ENCODE measurements at regions of chr19 and their contacts with region 1.

Region 1: DNA sequence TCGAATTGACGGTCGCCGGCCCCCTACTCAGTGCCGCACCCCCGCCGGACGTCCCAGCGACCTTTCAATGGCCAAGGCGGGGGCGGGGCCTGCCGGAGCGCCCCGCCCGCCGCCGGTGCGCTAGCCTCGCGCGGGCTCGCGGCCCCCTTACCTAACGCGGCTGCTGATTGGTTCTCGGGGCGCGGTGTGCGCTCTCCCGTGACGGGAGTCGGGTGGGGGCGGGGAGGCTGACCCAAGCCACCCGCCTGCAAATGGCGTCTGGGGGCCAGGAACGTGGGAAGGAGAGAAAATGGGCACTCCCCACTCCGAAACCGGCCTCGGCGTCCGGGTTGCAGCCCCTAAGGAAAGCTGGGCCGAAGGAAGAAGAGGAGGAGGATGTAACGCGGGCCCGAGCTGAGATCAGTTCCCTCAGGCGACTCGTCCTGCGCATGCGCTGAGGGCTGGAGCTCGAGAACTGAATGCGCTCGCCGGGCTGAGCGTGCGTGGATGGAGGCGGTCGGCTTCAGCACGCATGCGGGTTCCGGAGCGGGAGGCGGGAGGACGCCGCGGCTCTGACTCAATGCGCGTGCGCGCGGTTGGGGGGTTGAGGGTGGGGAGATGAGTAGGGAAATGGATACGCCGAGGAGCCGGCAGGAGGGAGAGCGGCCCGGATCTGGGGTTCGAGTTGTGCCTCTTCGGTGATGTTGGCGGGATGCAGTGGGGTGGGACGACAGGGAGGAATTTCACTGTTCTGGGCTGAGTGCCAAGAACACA is at the start of gene SMG9:
- DNase-seq: peak; percentile 81
- H3K4me3 ChIP-seq: peak within 1 kb of the TSS; percentile 62
- H3K27me3 ChIP-seq: no peaks in the 10 kb centered on the region
- CTCF ChIP-seq: no peak
- polyA plus RNA-seq, gene SMG9: 10.1 and 14.8 TPM in 2 replicates

Region 2: GRCh38 chr19:43606569-43607229 is 148.0 kb before region 1 on chr19:
- CTCF ChIA-PET with region 1: no interaction called
- POLR2A ChIA-PET with region 1: no interaction called
- DNase-seq: no peak
- H3K4me3 ChIP-seq: no peak overlapping the region
- H3K27me3 ChIP-seq: no peaks in the 10 kb centered on the region
- CTCF ChIP-seq: no peak

Region 3: DNA sequence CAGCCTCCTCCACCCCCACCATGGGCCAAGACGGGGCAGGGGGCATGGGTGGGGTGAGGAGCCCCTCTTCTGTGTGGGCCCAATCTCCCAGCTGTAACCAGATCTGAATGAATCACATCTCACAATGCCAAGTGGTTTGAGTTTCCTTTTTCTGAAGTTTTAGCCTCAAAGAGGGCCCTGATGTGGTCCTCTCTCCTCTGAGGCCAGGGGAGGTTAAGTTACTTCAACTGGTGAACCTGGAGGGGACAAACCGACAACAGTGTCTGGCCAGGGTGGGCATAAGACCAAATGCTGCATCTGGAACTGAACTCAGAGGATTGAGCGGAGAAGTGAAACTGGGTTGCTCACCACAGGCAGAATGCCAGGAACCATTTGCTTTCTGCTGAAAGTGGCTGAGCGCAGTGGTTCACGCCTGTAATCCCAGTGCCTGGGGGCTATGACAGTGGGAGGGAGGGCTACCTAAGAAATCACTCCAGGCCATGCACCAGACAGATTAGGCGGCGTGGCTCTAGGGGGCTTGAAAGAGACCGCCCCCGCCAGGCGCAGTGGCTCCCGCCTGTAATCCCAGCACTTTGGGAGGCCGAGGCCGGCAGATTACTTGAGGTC is 54.2 kb before region 1 on chr19:
- CTCF ChIA-PET with region 1: no interaction called
- POLR2A ChIA-PET with region 1: no interaction called
- DNase-seq: peak; percentile 26
- H3K4me3 ChIP-seq: no peak overlapping the region
- H3K27me3 ChIP-seq: peaks cover 3% of the 10 kb centered on the region
- CTCF ChIP-seq: no peak

Region 4: DNA sequence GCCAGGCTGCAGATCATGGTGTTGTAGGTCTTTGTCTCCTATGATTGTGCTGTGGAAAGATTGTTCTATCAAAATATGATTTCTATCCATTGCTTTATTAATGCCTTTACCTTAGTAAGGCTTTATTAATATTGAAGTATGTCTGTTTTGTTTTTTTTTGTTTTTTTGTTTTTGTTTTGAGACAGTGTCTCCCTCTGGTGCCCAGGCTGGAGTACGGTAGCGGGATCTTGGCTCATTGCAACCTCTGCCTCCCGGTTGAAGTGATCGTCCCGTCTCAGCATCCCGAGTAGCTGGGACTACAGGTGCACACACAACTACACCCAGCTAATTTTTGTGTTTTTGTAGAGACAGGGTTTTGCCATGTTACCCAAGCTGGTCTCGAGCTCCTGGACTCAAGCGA is 31.1 kb before region 1 on chr19:
- CTCF ChIA-PET with region 1: no interaction called
- POLR2A ChIA-PET with region 1: no interaction called
- DNase-seq: no peak
- H3K4me3 ChIP-seq: no peak overlapping the region
- H3K27me3 ChIP-seq: no peaks in the 10 kb centered on the region
- CTCF ChIP-seq: peak; percentile 26

Region 5: DNA sequence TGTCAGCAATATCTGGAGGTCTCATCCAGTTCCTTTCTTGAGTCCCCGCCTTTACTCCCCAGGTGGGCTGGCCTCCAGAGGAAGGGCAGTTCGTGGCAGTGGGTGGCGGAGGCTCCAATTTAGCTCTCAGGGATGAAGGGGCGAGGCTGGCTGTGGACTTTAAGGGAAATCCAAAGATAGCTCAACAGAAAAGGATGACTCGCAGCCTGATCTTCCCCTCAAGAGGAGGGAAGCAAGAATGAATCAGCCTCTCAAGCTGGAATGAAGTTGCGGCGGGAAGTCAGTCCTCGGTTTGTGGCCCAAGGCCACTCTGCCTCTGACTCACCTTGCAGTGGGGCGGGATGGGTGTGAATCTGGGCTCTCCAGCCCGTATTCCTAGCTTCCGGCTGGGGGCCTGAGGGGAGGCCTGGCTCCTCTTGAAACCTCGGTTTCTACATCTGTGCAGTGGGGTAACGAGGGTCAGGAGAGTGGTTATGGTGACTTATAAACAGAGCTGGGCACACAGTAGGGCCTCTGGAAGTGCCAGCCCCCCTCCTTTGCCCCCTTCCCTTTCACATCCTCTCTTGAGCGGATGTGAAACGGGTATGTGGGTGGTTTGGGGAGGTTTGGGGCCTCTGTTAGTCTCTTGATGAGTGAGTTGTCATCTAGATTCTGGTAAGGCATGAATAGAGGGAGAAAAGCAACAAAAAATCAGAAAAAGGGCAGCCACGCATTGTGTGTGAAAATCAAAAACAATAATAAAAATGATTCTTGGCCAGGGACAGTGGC is 10.6 kb after region 1 on chr19:
- CTCF ChIA-PET with region 1: interaction called, 44 read pairs
- POLR2A ChIA-PET with region 1: interaction called, 4 read pairs
- DNase-seq: peak; percentile 92
- H3K4me3 ChIP-seq: no peak overlapping the region
- H3K27me3 ChIP-seq: no peaks in the 10 kb centered on the region
- CTCF ChIP-seq: no peak

Region 6: GRCh38 chr19:43774103-43774939 is 19.6 kb after region 1 on chr19:
- CTCF ChIA-PET with region 1: interaction called, 44 read pairs
- POLR2A ChIA-PET with region 1: no interaction called
- DNase-seq: no peak
- H3K4me3 ChIP-seq: no peak overlapping the region
- H3K27me3 ChIP-seq: peaks cover 2% of the 10 kb centered on the region; the same call in 1 of the 2 replicates
- CTCF ChIP-seq: peak; percentile 85

Region 7: GRCh38 chr19:43855616-43856015 is 100.9 kb after region 1 on chr19:
- CTCF ChIA-PET with region 1: no interaction called
- POLR2A ChIA-PET with region 1: no interaction called
- DNase-seq: no peak
- H3K4me3 ChIP-seq: no peak overlapping the region
- H3K27me3 ChIP-seq: no peaks in the 10 kb centered on the region
- CTCF ChIP-seq: no peak